ENCODE measurements at regions of chr3 and their contacts with region 1.

Region 1: DNA sequence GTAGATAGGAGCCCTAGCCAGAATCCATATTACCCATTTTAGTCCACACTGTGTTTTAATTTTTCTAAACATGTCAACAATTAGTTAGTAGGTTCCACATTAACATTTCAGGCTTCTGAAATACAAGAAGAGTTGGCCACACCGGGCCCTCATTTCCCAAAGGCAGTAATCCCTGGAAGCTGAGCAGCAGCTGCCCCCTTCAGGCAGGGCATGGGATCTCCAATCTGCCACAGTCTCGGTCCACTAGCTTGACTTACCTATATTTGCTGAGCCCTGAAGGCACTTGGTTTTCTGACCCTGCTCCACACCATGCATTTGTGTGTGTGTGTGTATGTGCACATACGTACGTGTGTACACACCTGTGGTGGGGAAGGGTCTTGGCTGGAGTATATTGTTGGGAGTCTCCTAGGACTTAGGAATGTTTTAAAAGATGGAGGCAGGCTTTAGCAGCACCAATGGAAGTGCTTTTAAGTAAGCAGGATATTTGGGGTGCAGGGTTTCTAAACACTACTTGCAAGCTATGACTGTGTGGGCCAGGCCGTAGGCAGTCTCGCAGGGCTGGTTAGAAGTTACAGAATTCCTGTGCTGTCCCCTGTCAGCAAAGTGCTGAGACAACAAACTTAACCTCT is 71.2 kb upstream of the SOX14 start:
- DNase-seq: peak; percentile 16
- H3K4me3 ChIP-seq: no peak overlapping the region
- H3K27ac ChIP-seq: no peak overlapping the region
- H3K4me1 ChIP-seq: no peaks in the 10 kb centered on the region
- H3K27me3 ChIP-seq: no peaks in the 10 kb centered on the region
- CTCF ChIP-seq: peak; percentile 71 to 82

Region 2: GRCh38 chr3:137032465-137033120 is 660.3 kb before region 1 on chr3:
- CTCF ChIA-PET with region 1: no interaction called
- dilution Hi-C with region 1: no loop called
- in situ Hi-C with region 1: no loop called
- intact Hi-C with region 1: loop called (anchors 2 kb)
- DNase-seq: peak; percentile 65
- H3K4me3 ChIP-seq: peak overlapping the region in 2 of 3 experiments; percentile 17 to 33
- H3K27ac ChIP-seq: no peak overlapping the region
- H3K4me1 ChIP-seq: no peaks in the 10 kb centered on the region
- H3K27me3 ChIP-seq: no peaks in the 10 kb centered on the region
- CTCF ChIP-seq: peak; percentile 96 to 97

Region 3: GRCh38 chr3:137360531-137361201 is 332.3 kb before region 1 on chr3:
- CTCF ChIA-PET with region 1: no interaction called
- dilution Hi-C with region 1: no loop called
- in situ Hi-C with region 1: no loop called
- intact Hi-C with region 1: no loop called
- DNase-seq: no peak
- H3K4me3 ChIP-seq: no peak overlapping the region
- H3K27ac ChIP-seq: no peak overlapping the region
- H3K4me1 ChIP-seq: no peaks in the 10 kb centered on the region
- H3K27me3 ChIP-seq: no peaks in the 10 kb centered on the region
- CTCF ChIP-seq: no peak

Region 4: DNA sequence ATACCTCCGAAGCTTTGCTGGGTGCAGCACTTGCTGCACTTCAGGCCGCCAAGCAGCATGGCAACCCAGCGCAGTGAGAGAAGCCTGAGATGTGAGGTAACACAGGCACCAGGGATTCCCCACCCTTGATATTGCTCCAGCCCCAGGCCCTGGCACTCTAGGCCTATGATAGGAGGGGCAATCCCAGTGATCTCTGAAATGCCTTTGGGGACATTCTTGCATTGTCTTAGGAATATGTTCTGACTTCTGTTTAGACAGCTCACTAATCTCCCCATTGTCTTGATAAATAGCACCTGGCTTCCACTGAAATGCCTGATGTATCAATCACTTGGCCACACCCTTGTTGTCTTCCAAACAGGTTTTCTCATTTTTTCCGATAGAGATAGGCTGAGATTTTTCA is 174.0 kb after region 1 on chr3:
- CTCF ChIA-PET with region 1: no interaction called
- dilution Hi-C with region 1: no loop called
- in situ Hi-C with region 1: no loop called
- intact Hi-C with region 1: no loop called
- DNase-seq: no peak
- H3K4me3 ChIP-seq: no peak overlapping the region
- H3K27ac ChIP-seq: no peak overlapping the region
- H3K4me1 ChIP-seq: no peaks in the 10 kb centered on the region
- H3K27me3 ChIP-seq: no peaks in the 10 kb centered on the region
- CTCF ChIP-seq: no peak

Region 5: DNA sequence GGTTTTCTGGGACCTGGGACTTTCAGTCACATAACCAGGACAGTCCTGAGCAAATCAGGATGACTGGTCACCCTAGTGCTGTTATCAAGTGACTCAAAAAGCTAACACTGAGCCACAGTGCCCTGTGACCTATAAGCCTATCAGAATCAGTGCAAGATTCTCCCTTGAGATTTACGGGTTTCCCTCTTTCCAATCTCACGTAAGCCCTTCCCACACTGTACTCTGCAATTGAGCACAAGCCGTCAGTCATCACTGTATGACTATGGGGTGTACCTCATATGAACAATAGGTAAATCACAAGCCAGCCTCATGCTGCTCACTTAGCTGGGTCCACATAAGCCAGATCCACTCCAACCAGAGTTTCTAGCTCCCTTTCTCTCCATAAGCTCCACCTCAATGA is 296.1 kb after region 1 on chr3:
- CTCF ChIA-PET with region 1: interaction called, 10 read pairs
- dilution Hi-C with region 1: no loop called
- in situ Hi-C with region 1: no loop called
- intact Hi-C with region 1: no loop called
- DNase-seq: no peak
- H3K4me3 ChIP-seq: no peak overlapping the region
- H3K27ac ChIP-seq: no peak overlapping the region
- H3K4me1 ChIP-seq: no peaks in the 10 kb centered on the region
- H3K27me3 ChIP-seq: peaks cover 2% of the 10 kb centered on the region
- CTCF ChIP-seq: no peak

Measured in mammary epithelial cell (primary cell).